ENCODE measurements at regions of chr15 and their contacts with region 1.

Region 1: DNA sequence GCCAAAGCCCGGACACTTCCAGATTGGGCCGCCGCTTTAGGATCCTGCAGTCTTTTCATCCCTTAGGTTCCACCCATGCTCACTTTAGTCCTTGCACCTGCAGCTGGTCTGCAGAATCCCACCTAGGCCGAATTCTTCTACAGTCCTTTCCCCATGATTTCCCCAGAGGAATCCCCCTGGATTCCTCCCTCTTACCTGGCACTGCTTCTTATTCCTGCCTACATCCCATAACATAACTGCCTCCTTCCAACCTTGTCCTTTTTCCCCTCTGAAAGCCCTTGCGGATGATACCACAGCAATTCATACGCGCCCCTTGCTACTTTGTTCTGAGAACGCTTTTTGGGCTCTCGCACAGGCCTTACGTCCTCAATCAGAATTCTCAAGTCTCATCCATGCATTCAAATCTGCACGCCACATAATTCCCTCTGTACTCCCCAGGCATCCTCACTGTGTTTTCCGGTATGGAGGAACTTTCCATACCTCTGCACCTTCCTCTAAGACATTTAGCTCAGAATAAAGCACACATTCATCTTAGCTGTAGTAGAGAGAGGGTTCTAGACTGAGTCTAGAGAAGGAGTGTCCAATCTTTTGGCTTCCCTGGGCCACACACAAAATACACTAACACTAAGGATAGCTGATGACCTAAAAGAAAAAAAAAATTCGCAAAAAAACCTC is 619 bp downstream of the EIF2AK4 start:
- DNase-seq: no peak
- H3K4me3 ChIP-seq: peak overlapping the region; percentile 70 to 72
- H3K27ac ChIP-seq: peak overlapping the region; percentile 77 to 82
- H3K4me1 ChIP-seq: peaks cover 6% of the 10 kb centered on the region
- H3K27me3 ChIP-seq: no peaks in the 10 kb centered on the region
- CTCF ChIP-seq: no peak
- POLR2A ChIP-seq: no peak

Region 2: DNA sequence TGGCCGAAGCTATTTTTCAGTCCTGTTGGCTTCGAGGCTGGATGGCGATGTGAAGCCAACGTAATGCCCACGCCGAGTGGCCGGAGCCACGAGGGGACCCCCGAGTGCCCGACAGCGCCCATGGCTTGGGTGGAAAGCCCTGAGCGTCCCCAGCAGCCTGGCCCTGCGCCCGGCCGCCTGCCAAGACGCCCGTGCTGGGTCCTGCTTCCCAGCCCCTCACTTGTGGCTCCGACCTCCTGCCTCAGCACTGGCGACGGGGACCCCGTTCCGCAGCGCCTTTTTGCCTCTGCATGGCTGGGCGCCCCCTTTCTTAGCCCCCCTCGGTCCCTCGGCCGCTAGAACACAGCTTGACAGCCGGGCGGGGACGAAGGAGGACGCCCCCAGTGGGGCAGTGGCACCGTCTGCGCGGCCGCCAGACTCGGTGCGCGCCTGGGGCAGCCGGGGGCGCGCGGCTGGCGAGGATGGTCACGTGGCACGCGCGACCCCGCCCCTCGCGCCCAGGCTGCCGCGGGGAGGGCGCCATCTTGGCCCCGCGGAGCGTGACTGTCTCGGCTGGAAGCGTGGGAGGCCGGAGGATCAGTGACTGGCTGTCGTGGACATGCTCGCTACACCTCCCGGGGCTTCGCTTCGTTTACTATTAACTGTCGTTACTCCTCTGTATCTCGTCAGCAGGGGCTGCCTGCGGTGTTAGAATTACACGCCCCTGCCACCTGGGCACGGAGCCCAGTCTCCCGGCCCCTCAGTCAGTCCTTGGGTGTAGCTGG is 13.8 kb before region 1 on chr15:
- intact Hi-C with region 1: loop called (anchors 2 kb)
- DNase-seq: peak; percentile 57
- H3K4me3 ChIP-seq: peak overlapping the region; percentile 74 to 80
- H3K27ac ChIP-seq: peak overlapping the region; percentile 78 to 80
- H3K4me1 ChIP-seq: no peaks in the 10 kb centered on the region
- H3K27me3 ChIP-seq: no peaks in the 10 kb centered on the region
- CTCF ChIP-seq: peak in 1 of 4 experiments; percentile 37
- POLR2A ChIP-seq: peak; percentile 50

Region 3: DNA sequence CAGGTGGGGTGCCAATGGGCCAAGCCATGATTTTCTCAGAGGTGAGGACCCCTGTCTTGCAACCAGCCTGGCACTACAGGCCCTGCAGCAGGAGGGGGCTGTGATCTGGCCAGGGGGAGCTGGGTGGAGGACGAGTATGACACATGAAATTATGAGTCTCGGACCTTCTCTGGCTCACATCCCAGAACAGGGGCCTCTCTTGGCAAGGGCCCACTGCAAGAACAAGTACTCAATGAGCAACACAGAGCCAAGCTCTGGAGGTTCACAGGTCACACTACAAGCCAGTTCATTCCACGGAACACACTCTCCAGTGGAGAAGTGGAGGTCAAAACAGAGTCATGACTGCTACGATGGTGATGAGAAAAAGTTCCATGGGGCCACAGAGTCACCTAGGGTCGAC is 602.0 kb after region 1 on chr15:
- intact Hi-C with region 1: no loop called
- DNase-seq: no peak
- H3K4me3 ChIP-seq: no peak overlapping the region
- H3K27ac ChIP-seq: no peak overlapping the region
- H3K4me1 ChIP-seq: no peaks in the 10 kb centered on the region
- H3K27me3 ChIP-seq: no peaks in the 10 kb centered on the region
- CTCF ChIP-seq: no peak
- POLR2A ChIP-seq: no peak